GM18951 (cell line): ENCODE measurements at regions of chr1 and their contacts with region 1.

Region 1: DNA sequence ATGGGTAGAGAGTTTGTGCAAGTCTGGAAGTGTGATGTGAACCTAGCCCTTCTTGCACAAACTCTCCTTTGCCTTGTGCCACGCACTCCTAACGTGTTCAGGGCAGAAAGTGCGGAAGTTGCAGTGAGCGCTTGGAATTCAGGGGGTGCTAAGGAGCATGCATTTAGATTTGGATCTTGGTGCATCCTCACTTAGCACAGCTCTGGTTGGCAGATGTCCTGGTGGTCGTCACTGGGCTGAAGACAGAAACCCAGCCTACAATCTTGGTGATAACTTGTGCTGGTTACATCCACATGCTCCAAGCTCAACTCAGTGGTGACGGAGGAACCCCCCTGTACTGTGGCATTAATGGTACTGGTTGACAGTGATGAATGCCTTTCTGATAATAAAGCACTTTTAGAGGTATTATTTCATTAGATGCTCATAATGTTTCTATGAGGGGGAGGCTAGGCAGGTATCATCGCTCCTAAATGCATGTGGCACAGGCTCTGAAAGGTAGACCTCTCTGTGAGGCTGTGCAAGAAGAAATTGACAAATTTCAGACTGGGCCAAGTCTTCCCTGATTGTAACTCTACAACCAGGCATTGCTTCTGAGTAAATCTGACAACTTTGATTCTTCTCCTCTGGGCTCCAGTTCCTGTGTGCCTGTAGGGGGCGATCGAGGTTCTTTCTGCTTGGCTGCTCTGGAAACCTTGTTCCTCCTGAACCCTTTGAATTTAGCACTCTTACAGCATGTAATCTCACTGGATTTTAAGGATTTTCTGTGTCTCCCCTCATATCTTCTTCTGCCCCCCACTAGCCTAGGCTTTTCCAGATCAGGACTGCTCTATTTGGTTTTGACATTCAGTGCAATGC is 40.6 kb downstream of the MAPKAPK2 start:
- POLR2A ChIP-seq: no peak

Region 2: DNA sequence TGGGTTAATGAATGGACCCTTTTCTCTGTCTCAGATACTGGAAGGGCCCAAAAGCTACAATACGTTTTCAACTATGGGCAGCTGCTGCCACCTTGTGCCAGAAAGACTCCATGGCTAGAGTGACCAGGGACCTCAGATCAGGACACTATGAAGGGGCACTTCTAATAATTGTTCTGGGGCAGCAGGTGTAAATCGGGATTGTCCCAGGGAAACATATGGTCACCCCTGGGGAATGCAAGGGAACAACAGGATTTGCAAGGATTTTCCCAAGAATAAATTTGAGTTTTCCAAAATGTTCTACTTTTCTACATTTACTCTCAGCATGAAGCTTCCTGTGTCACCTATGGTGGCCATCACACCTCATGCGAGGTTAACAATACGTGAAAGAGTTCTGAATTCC is 256.9 kb after region 1 on chr1:
- in situ Hi-C with region 1: loop called (anchors 5 kb)
- POLR2A ChIP-seq: no peak